ENCODE measurements at regions of chr12 and their contacts with region 1.

Region 1: GRCh38 chr12:55074771-55075170 is 51.4 kb upstream of the OR9K2 start:
- DNase-seq: no peak

Region 2: DNA sequence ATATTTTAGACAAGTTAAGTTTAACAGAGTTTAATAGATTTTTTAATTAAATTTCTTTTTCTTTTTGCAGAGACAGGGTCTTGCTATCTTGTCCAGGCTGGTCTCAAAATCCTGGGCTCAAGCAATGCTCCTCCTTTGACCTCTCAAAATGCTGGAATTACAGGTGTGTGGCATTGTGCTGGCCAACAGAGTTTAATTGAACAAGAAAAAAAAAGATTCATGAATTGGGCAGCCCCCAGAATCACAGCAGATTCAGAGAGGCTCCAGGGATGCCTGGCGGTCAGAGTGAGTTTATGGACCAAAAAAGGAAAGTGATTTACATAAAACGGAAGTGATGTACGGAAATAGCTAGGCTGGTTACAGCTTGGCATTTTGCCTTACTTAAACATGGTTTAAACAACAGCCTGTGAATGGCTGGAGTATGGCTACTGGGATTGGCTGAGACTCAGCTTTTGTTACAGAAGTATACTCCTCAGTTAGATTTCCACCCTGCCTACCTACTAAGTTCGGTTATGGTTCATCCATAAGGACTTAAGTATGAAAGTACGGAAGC is 75.7 kb before region 1 on chr12:
- in situ Hi-C with region 1: loop called (anchors 5 kb)
- DNase-seq: no peak